ENCODE measurements at regions of chr11 and their contacts with region 1.

Region 1: DNA sequence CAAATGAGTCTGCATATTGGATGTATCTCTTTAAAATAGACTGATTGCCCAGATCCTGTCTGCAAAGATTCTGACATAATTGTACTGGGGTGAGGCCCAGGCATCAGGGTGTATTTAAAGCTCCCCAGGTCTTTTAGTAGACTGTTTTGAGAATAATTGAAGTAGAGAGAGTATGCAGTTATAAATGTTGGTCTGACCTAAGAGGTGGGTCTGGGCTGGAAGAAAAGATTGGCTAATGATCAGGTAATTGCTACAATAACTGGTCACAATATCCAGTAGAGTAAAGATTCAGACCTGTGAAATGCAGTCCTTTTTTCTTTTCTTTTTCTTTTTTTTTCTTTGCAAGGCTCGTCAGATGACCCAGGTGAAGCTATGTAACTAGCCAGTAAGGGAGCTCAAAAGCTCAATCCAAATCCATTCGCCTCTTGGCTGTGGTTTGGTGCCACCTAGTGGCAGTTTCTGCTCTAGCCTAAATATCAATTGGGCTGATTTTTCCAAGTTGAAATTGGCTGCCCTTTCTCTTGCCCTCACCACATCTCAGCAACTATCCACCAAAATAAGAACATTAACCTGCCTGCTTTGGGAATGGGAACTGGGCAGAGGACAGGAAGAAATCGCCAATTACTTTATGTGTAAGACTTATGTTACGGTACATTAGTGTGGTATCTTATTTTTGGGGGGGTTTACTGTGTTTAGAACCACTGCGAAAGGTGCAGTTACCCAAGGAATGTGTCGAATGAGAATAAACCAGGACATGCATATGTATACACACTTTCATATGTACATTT is 45.9 kb downstream of the ZNF143 start:
- DNase-seq: peak; percentile 72
- ATAC-seq: peak; percentile 70
- H3K4me3 ChIP-seq: no peak overlapping the region
- H3K27ac ChIP-seq: no peak overlapping the region
- H3K4me1 ChIP-seq: peaks cover 36% of the 10 kb centered on the region
- H3K27me3 ChIP-seq: no peaks in the 10 kb centered on the region
- CTCF ChIP-seq: peak; percentile 90
- EP300 ChIP-seq: no peak
- POLR2A ChIP-seq: no peak
- RAD21 ChIP-seq: peak; percentile 79

Region 2: GRCh38 chr11:9015677-9016076 is 491.0 kb before region 1 on chr11:
- CTCF ChIA-PET with region 1: no interaction called
- POLR2A ChIA-PET with region 1: no interaction called
- in situ Hi-C with region 1: no loop called
- intact Hi-C with region 1: loop called (anchors 5 kb)
- DNase-seq: peak; percentile 56
- ATAC-seq: peak; percentile 92
- H3K4me3 ChIP-seq: no peak overlapping the region
- H3K27ac ChIP-seq: no peak overlapping the region
- H3K4me1 ChIP-seq: no peaks in the 10 kb centered on the region
- H3K27me3 ChIP-seq: peaks cover 0 to 17% of the 10 kb centered on the region in 2 experiments; a peak in 4 of 5 replicates
- CTCF ChIP-seq: peak; percentile 86
- EP300 ChIP-seq: no peak
- POLR2A ChIP-seq: no peak
- RAD21 ChIP-seq: peak; percentile 53

Region 3: GRCh38 chr11:9028581-9028980 is 478.1 kb before region 1 on chr11:
- CTCF ChIA-PET with region 1: no interaction called
- POLR2A ChIA-PET with region 1: no interaction called
- in situ Hi-C with region 1: no loop called
- intact Hi-C with region 1: no loop called
- DNase-seq: no peak
- ATAC-seq: no peak
- H3K4me3 ChIP-seq: no peak overlapping the region
- H3K27ac ChIP-seq: no peak overlapping the region
- H3K4me1 ChIP-seq: no peaks in the 10 kb centered on the region
- H3K27me3 ChIP-seq: peaks cover 0 to 12% of the 10 kb centered on the region in 2 experiments; a peak in 3 of 5 replicates
- CTCF ChIP-seq: no peak
- EP300 ChIP-seq: no peak
- POLR2A ChIP-seq: no peak
- RAD21 ChIP-seq: no peak

Region 4: DNA sequence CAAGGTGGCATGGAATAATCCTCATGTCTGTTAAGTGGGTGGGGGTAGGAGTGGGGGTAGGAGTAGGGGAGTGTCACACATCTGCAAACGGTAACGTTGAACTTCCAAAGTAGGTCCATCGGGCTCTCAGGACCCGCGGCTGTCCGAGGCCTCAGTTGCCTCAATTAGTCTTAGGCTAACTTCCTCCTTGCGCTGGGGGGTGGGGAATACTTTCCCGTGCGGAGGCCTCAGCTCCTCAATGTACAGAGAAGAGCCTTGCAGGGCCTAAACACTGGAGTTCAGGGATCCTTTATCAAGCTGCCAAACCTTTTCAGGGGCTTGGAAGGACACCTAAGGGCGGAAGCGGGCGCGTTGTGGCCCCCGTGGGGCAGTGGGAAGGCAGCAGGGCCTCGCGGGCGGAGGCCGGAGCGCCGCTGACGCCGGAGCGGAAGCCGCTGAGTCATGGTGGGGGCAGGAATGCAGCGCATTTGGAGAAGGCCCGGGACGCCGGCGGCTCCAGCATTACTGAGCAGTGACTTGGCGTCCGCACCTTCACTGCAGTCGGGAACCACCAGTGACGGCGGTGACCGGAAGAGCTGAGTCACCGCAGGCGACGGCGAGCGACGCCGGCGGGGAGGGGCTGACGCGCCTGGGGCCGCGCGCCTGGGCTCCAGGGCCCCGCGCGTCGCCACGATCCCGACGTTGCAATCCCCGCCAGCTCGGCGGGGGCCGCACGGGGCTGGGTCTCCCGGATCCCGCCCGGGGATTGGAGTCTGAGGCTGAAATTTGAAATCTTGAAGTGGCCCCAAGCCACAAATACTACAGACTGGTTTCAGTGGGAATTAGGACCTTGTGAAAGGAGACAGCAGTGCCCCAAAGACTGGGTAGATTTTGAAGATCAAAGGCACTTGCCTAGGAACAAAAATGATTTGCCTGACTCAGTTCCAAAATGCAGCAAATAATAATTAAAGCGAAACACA is 142.4 kb before region 1 on chr11:
- CTCF ChIA-PET with region 1: no interaction called
- POLR2A ChIA-PET with region 1: no interaction called
- in situ Hi-C with region 1: no loop called
- intact Hi-C with region 1: no loop called
- DNase-seq: peak; percentile 94
- ATAC-seq: peak; percentile 96
- H3K4me3 ChIP-seq: peak overlapping the region; percentile 64 to 76 (median 68)
- H3K27ac ChIP-seq: peak overlapping the region; percentile 99
- H3K4me1 ChIP-seq: peaks cover 34% of the 10 kb centered on the region
- H3K27me3 ChIP-seq: no peaks in the 10 kb centered on the region
- CTCF ChIP-seq: peak; percentile 39
- EP300 ChIP-seq: peak; percentile 65 to 68
- POLR2A ChIP-seq: peak; percentile 74 to 78
- RAD21 ChIP-seq: peak; percentile 44; the same call in 1 of the 2 replicates

Region 5: GRCh38 chr11:9448576-9449352 is 57.9 kb before region 1 on chr11:
- CTCF ChIA-PET with region 1: no interaction called
- POLR2A ChIA-PET with region 1: no interaction called
- in situ Hi-C with region 1: no loop called
- intact Hi-C with region 1: loop called (anchors 10 kb)
- DNase-seq: no peak
- ATAC-seq: peak; percentile 13; the same call in 1 of the 3 replicates
- H3K4me3 ChIP-seq: no peak overlapping the region
- H3K27ac ChIP-seq: no peak overlapping the region
- H3K4me1 ChIP-seq: no peaks in the 10 kb centered on the region
- H3K27me3 ChIP-seq: no peaks in the 10 kb centered on the region
- CTCF ChIP-seq: no peak
- EP300 ChIP-seq: no peak
- POLR2A ChIP-seq: no peak
- RAD21 ChIP-seq: no peak

Region 6: GRCh38 chr11:9565822-9566560 is 59.3 kb after region 1 on chr11:
- CTCF ChIA-PET with region 1: no interaction called
- POLR2A ChIA-PET with region 1: interaction called, 10 read pairs
- in situ Hi-C with region 1: no loop called
- intact Hi-C with region 1: no loop called
- DNase-seq: peak; percentile 99
- ATAC-seq: peak; percentile 75
- H3K4me3 ChIP-seq: peak overlapping the region in 1 of 3 experiments; percentile 12; a peak in 1 of 6 replicates
- H3K27ac ChIP-seq: peak overlapping the region; percentile 100
- H3K4me1 ChIP-seq: peaks cover 68% of the 10 kb centered on the region
- H3K27me3 ChIP-seq: no peaks in the 10 kb centered on the region
- CTCF ChIP-seq: no peak
- EP300 ChIP-seq: peak; percentile 55 to 72; a peak in 2 of 4 replicates
- POLR2A ChIP-seq: peak in 1 of 2 experiments; percentile 58; a peak in 1 of 4 replicates
- RAD21 ChIP-seq: no peak

Region 7: GRCh38 chr11:9573052-9573774 is 66.5 kb after region 1 on chr11 and contains the start of gene WEE1:
- CTCF ChIA-PET with region 1: no interaction called
- POLR2A ChIA-PET with region 1: interaction called, 11 read pairs
- in situ Hi-C with region 1: no loop called
- intact Hi-C with region 1: loop called (anchors 2 kb)
- DNase-seq: peak; percentile 94
- ATAC-seq: peak; percentile 88
- H3K4me3 ChIP-seq: peak within 1 kb of the TSS; percentile 78 to 90 (median 87)
- H3K27ac ChIP-seq: peak within 1 kb of the TSS; percentile 100
- H3K4me1 ChIP-seq: peaks cover 67% of the 10 kb centered on the region
- H3K27me3 ChIP-seq: no peaks in the 10 kb centered on the region; a peak in 1 of 5 replicates
- CTCF ChIP-seq: no peak
- EP300 ChIP-seq: peak in 1 of 2 experiments; percentile 16; a peak in 2 of 4 replicates
- POLR2A ChIP-seq: peak in 1 of 2 experiments; percentile 91
- RAD21 ChIP-seq: no peak; the same call in 1 of the 2 replicates
- total RNA-seq, gene WEE1: 63.7 and 71.7 TPM in 2 replicates

Measured in HepG2 (cell line).